ENCODE measurements at regions of chr2 and their contacts with region 1.

Region 1: GRCh38 chr2:200913654-200914053 is 24.5 kb downstream of the NIF3L1 start:
- DNase-seq: no peak
- H3K4me3 ChIP-seq: no peak overlapping the region
- H3K27ac ChIP-seq: no peak overlapping the region
- H3K4me1 ChIP-seq: no peaks in the 10 kb centered on the region
- H3K27me3 ChIP-seq: no peaks in the 10 kb centered on the region
- CTCF ChIP-seq: no peak
- EP300 ChIP-seq: no peak
- POLR2A ChIP-seq: no peak

Region 2: GRCh38 chr2:201171259-201171814 is 257.7 kb after region 1 on chr2:
- in situ Hi-C with region 1: loop called (anchors 5 to 25 kb)
- intact Hi-C with region 1: loop called (anchors 10 kb)
- DNase-seq: no peak
- H3K4me3 ChIP-seq: no peak overlapping the region
- H3K27ac ChIP-seq: no peak overlapping the region
- H3K4me1 ChIP-seq: peaks cover 3 to 15% (median 10%) of the 10 kb centered on the region in 4 donors
- H3K27me3 ChIP-seq: no peaks in the 10 kb centered on the region
- CTCF ChIP-seq: no peak
- EP300 ChIP-seq: no peak
- POLR2A ChIP-seq: no peak